Calu3 (cell line): ENCODE measurements at regions of chr7 and their contacts with region 1.

Region 1: GRCh38 chr7:93231799-93232672 is at the start of gene VPS50:
- DNase-seq: peak; percentile 94
- H3K4me3 Mint-ChIP-seq: peak within 1 kb of the TSS; percentile 93
- H3K27ac Mint-ChIP-seq: peak within 1 kb of the TSS; percentile 94
- H3K4me1 Mint-ChIP-seq: no peaks in the 10 kb centered on the region
- H3K27me3 Mint-ChIP-seq: no peaks in the 10 kb centered on the region
- CTCF ChIP-seq: no peak
- total RNA-seq, gene VPS50: 31.6 and 36.9 TPM in 2 replicates

Region 2: GRCh38 chr7:92584996-92585395 is 647.0 kb before region 1 on chr7:
- CTCF ChIA-PET with region 1: no interaction called
- intact Hi-C with region 1: no loop called
- DNase-seq: no peak
- H3K4me3 Mint-ChIP-seq: no peak overlapping the region
- H3K27ac Mint-ChIP-seq: no peak overlapping the region
- H3K4me1 Mint-ChIP-seq: peaks cover 12% of the 10 kb centered on the region
- H3K27me3 Mint-ChIP-seq: no peaks in the 10 kb centered on the region
- CTCF ChIP-seq: no peak

Region 3: DNA sequence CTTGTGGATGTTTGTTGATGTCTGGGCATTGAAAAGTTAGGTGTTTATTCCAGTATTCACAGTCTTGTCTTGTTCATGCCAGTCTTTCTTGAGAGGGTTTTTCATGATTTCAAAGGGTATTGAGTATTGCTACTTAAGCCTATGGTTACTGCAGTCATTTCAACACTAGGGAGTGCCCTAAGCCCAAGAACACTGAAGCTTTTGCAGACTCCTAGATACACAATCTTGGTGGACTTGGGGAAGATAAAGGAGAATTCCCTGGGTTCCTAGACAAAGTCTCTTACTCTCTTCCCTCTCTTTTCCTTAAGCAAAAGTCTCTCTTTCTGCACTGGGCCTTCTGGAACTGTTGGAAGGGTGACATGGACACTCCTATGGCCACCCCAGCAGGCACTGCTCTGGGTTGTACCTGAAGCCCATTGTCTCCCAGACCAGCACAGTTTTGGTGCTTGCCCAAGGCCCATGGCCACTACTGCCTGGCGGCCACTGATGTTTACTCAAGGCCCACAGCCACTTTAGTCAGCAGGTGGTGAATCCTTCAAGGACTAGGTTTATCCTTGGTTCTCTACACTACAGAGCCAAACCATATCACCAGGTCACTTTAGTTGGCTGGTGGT is 139.2 kb before region 1 on chr7:
- CTCF ChIA-PET with region 1: interaction called, 4 read pairs
- intact Hi-C with region 1: loop called (anchors 1 kb)
- DNase-seq: peak; percentile 22
- H3K4me3 Mint-ChIP-seq: no peak overlapping the region
- H3K27ac Mint-ChIP-seq: no peak overlapping the region
- H3K4me1 Mint-ChIP-seq: no peaks in the 10 kb centered on the region
- H3K27me3 Mint-ChIP-seq: no peaks in the 10 kb centered on the region
- CTCF ChIP-seq: no peak

Region 4: DNA sequence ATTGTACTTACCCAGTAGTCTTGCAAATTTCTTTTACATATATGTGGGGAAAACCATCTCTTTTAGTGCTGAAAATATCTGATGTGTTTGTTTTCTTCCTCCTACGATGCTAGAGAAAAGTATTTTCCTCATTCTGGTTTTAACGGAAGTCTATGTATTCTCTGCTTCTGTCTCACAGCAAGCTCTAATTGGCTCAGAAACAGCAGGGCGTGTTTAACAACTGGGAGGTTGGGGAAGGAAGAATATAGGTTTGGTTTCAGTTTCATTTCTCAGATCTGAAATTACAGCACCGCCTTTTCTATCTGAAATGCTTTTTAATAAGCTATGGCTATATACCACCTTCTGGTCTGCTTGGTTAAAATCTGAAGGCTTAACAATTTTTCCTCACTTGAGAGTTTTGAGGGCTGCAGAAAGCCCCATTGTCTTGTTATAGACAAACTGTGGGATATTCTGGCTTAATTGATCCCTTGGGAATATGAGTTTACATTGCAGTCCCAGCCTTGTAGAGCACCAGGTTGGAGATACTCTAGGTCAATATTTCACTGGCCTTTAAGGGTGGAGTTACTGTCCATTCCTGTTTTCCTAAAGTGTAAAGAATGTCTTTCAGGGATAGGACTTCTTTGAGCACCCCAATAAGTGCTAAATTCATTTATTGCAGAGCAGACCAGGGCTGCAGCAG is 114.0 kb before region 1 on chr7 and contains the start of gene SAMD9:
- CTCF ChIA-PET with region 1: interaction called, 3 read pairs
- intact Hi-C with region 1: loop called (anchors 2 kb)
- DNase-seq: peak; percentile 70
- H3K4me3 Mint-ChIP-seq: peak within 1 kb of the TSS; percentile 75
- H3K27ac Mint-ChIP-seq: peak within 1 kb of the TSS; percentile 70
- H3K4me1 Mint-ChIP-seq: peaks cover 54% of the 10 kb centered on the region
- H3K27me3 Mint-ChIP-seq: no peaks in the 10 kb centered on the region
- CTCF ChIP-seq: no peak
- total RNA-seq, gene SAMD9: 74.8 and 167 TPM in 2 replicates

Region 5: GRCh38 chr7:93178212-93178611 is 53.8 kb before region 1 on chr7:
- CTCF ChIA-PET with region 1: interaction called, 4 read pairs
- intact Hi-C with region 1: loop called (anchors 1 kb)
- DNase-seq: no peak
- H3K4me3 Mint-ChIP-seq: no peak overlapping the region
- H3K27ac Mint-ChIP-seq: no peak overlapping the region
- H3K4me1 Mint-ChIP-seq: no peaks in the 10 kb centered on the region
- H3K27me3 Mint-ChIP-seq: peaks cover 9% of the 10 kb centered on the region
- CTCF ChIP-seq: no peak